Activated B cell treated with CpG ODN at 0.5 μM for 24 hours (primary cell): ENCODE measurements at regions of chr3 and their contacts with region 1.

Region 1: GRCh38 chr3:179562591-179563270 is at the start of gene ACTL6A:
- DNase-seq: peak; percentile 94
- ATAC-seq: peak; percentile 92
- H3K4me3 Mint-ChIP-seq: peak within 1 kb of the TSS; percentile 99
- H3K27ac Mint-ChIP-seq: peak within 1 kb of the TSS; percentile 97
- H3K4me1 Mint-ChIP-seq: peaks cover 24% of the 10 kb centered on the region
- H3K27me3 Mint-ChIP-seq: no peaks in the 10 kb centered on the region
- CTCF ChIP-seq: no peak
- total RNA-seq, gene ACTL6A: 55.0 and 58.2 TPM in 2 replicates

Region 2: GRCh38 chr3:179015551-179016020 is 547.1 kb before region 1 on chr3:
- CTCF ChIA-PET with region 1: interaction called, 6 read pairs
- POLR2A ChIA-PET with region 1: no interaction called
- intact Hi-C with region 1: loop called (anchors 1 kb)
- DNase-seq: no peak
- ATAC-seq: peak; percentile 74
- H3K4me3 Mint-ChIP-seq: peak overlapping the region; percentile 15
- H3K27ac Mint-ChIP-seq: peak overlapping the region; percentile 57
- H3K4me1 Mint-ChIP-seq: peaks cover 59% of the 10 kb centered on the region
- H3K27me3 Mint-ChIP-seq: no peaks in the 10 kb centered on the region
- CTCF ChIP-seq: peak; percentile 88

Region 3: GRCh38 chr3:179260949-179261765 is 301.6 kb before region 1 on chr3:
- CTCF ChIA-PET with region 1: no interaction called
- POLR2A ChIA-PET with region 1: no interaction called
- intact Hi-C with region 1: loop called (anchors 2 kb)
- DNase-seq: peak; percentile 75
- ATAC-seq: peak; percentile 88
- H3K4me3 Mint-ChIP-seq: peak overlapping the region; percentile 84
- H3K27ac Mint-ChIP-seq: peak overlapping the region; percentile 71
- H3K4me1 Mint-ChIP-seq: peaks cover 53% of the 10 kb centered on the region
- H3K27me3 Mint-ChIP-seq: no peaks in the 10 kb centered on the region
- CTCF ChIP-seq: no peak

Region 4: DNA sequence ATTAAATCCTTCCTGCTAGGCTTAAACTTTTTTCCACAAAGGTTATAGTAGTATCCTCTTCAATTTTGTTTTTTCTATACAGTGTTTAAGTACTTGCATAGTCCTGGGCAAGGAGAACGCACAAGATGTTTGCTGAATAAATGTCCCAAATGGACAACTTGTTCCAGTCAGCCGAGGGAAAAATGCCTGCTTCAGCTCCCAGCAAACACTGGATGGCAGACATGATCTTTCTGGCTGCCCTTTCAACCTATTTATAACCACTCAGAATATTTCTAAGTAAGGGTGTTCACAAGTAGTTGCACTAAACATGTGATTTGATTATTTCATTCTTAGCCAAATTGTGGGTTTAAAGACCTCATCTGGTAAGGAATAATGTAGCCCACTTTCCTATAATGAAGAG is 141.2 kb before region 1 on chr3:
- CTCF ChIA-PET with region 1: interaction called, 14 read pairs
- POLR2A ChIA-PET with region 1: no interaction called
- intact Hi-C with region 1: loop called (anchors 1 kb)
- DNase-seq: no peak
- ATAC-seq: no peak
- H3K4me3 Mint-ChIP-seq: no peak overlapping the region
- H3K27ac Mint-ChIP-seq: no peak overlapping the region
- H3K4me1 Mint-ChIP-seq: peaks cover 2% of the 10 kb centered on the region
- H3K27me3 Mint-ChIP-seq: no peaks in the 10 kb centered on the region
- CTCF ChIP-seq: no peak

Region 5: GRCh38 chr3:179604321-179605078 is 41.8 kb after region 1 on chr3 and contains the starts of genes MRPL47 and NDUFB5:
- CTCF ChIA-PET with region 1: no interaction called
- POLR2A ChIA-PET with region 1: interaction called, 22 read pairs
- intact Hi-C with region 1: loop called (anchors 1 kb)
- DNase-seq: peak; percentile 82
- ATAC-seq: peak; percentile 96
- H3K4me3 Mint-ChIP-seq: peak within 1 kb of the TSS; percentile 99
- H3K27ac Mint-ChIP-seq: peak within 1 kb of the TSS; percentile 99
- H3K4me1 Mint-ChIP-seq: peaks cover 51% of the 10 kb centered on the region
- H3K27me3 Mint-ChIP-seq: no peaks in the 10 kb centered on the region
- CTCF ChIP-seq: no peak
- total RNA-seq, gene MRPL47: 38.6 and 44.3 TPM in 2 replicates
- total RNA-seq, gene NDUFB5: 63.5 and 67.3 TPM in 2 replicates

Region 6: DNA sequence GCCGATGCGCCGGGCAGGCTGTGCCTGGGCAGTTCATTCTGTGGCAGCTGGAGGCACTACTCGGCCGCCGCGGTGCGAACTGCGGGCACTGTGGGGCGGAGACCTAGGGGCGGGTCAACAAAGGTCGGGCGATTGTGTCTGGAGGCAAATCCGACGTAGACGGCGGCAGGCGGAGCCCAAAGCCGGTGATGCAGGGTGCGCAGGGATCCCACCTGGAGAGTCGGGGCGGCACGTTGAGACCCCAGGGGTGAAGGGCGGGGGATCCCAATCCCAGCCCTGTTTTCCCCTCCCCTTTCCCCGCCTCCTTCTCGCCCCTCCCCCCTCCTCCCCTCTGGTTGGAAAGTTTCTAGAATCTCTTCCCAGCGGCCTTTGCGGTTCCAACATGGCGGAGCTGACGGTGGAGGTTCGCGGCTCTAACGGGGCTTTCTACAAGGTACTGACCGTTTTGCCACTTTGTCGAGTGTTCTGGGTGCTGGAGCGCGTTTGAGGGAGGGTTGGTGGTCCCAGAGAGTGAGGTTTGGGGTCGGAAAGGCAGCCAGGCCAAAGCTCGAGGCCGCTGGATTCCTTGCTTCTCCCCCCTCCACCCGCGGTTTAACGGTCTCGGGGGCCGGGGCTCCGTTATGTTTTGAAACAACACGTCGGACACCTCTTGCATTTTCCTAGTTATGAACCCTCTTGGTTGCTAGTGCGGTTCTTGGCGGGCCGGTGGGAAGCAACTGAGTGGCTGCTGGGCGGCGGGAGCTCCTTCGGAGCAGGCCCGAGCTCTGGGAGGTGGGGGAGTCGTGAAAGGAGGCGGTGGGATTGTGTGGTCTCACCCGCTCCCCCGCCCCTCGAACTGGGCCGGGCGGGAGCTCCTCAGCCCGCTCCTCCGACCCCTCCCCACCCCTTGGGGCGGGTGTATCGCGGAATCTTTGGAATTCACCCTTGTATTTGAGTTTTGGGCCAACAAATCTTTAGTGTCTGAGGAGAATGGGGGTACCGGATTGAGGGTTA is 1349.9 kb after region 1 on chr3 and contains the start of gene FXR1:
- CTCF ChIA-PET with region 1: no interaction called
- POLR2A ChIA-PET with region 1: no interaction called
- intact Hi-C with region 1: loop called (anchors 2 kb)
- DNase-seq: peak; percentile 90
- ATAC-seq: peak; percentile 95
- H3K4me3 Mint-ChIP-seq: peak within 1 kb of the TSS; percentile 94
- H3K27ac Mint-ChIP-seq: peak within 1 kb of the TSS; percentile 95
- H3K4me1 Mint-ChIP-seq: peaks cover 52% of the 10 kb centered on the region
- H3K27me3 Mint-ChIP-seq: no peaks in the 10 kb centered on the region
- CTCF ChIP-seq: no peak
- total RNA-seq, gene FXR1: 130 TPM in 2 replicates